OCI-LY7 (cell line): ENCODE measurements at regions of chr12 and their contacts with region 1.

Region 1: GRCh38 chr12:95963096-95963495 is 20.0 kb downstream of the AMDHD1 start:
- DNase-seq: peak; percentile 33
- H3K4me3 ChIP-seq: no peak overlapping the region
- H3K27ac ChIP-seq: no peak overlapping the region
- H3K4me1 ChIP-seq: no peaks in the 10 kb centered on the region
- CTCF ChIP-seq: peak; percentile 68

Region 2: DNA sequence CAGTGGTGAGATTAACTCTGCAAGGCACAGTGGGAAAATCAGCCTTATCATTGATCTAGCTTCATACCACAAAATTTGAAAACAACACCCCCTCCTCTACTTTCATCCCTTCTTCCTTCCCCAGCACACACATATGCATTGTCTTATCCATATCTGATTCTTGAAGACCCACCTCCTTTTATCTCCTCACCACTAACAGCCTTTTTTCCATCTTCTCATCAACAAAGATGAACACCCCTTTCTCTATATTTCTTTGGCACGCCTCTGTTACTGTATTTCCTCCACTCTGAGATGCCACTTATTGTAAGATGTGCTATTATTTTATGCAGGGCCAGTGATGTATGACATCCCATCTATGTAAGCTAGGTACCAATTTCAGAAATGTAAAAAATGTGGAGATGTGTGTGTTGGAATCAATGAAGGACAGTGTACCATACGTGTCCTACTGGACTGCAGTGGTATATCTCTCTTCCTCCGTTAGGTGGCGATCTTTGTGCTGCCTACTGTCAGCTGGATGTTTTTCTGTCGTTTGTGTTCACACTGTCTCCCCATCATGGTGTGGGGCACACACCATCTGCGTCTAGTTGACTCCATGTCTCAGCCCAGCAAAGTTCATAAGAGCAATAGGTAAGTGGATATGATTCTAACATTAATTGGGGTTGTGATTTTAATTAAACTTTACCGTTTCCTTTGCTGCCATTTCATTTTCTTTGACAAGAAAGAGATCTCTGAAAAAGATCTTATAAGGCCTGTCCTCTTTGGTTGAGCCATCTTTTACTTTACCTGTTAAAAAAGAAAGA is 44.7 kb before region 1 on chr12:
- CTCF ChIA-PET with region 1: no interaction called
- POLR2A ChIA-PET with region 1: no interaction called
- intact Hi-C with region 1: loop called (anchors 2 kb)
- DNase-seq: peak; percentile 75
- H3K4me3 ChIP-seq: no peak overlapping the region
- H3K27ac ChIP-seq: no peak overlapping the region
- H3K4me1 ChIP-seq: peaks cover 4% of the 10 kb centered on the region
- CTCF ChIP-seq: peak; percentile 93

Region 3: DNA sequence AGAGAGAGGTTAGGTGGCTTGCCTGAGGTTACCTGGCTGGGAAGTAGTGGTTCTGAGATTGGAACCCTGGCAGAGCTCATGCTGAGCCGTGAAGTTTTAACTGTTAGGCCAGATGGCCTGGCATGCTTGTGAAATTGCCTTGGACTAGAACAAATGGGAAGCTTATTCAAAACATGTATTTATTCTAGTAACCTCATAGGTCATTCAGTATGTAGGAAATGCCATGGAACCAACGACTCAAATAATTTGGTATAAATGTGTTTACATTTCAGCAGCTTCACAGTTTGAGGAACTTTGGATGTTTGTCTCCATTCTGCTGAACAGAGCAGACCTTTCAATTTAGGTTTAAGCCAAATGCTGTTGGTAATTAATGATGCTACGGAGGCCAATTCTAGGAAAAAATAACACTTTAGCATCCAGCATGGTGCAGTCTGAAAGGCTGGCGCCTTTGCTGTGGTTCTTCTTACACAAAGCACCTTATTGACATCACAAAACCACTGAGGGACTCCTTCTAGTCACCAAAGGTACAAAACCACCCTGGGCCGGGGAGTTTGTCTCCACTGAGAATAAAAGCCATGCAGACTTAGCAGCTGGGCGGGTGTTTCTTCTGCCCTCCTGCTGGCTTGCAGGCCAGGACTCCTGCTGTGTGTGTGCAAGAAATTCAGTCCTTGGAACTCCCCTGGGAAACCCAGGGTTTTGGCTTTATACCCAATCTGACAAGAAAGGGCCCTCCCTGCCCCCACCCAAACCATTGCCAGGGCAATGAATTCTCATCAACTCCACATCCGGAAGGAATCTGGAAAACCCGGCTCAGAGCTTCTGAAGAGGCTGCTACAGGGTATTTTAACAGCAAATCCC is 295.2 kb after region 1 on chr12:
- CTCF ChIA-PET with region 1: no interaction called
- POLR2A ChIA-PET with region 1: no interaction called
- intact Hi-C with region 1: no loop called
- DNase-seq: no peak
- H3K4me3 ChIP-seq: no peak overlapping the region
- H3K27ac ChIP-seq: no peak overlapping the region
- H3K4me1 ChIP-seq: no peaks in the 10 kb centered on the region
- CTCF ChIP-seq: no peak